ENCODE measurements at regions of chr11 and their contacts with region 1.

Region 1: GRCh38 chr11:83521647-83522596 is 235.8 kb upstream of the CCDC90B start:
- DNase-seq: peak in 2 of 4 experiments; percentile 2 to 7
- ATAC-seq: peak; percentile 53; the same call in 1 of the 3 replicates
- H3K4me3 ChIP-seq: no peak overlapping the region
- H3K27ac ChIP-seq: no peak overlapping the region
- H3K4me1 ChIP-seq: no peaks in the 10 kb centered on the region
- H3K27me3 ChIP-seq: no peaks in the 10 kb centered on the region
- CTCF ChIP-seq: peak in 2 of 3 experiments; percentile 17 to 35; a peak in 3 of 6 replicates
- EP300 ChIP-seq: no peak
- POLR2A ChIP-seq: no peak
- RAD21 ChIP-seq: no peak

Region 2: DNA sequence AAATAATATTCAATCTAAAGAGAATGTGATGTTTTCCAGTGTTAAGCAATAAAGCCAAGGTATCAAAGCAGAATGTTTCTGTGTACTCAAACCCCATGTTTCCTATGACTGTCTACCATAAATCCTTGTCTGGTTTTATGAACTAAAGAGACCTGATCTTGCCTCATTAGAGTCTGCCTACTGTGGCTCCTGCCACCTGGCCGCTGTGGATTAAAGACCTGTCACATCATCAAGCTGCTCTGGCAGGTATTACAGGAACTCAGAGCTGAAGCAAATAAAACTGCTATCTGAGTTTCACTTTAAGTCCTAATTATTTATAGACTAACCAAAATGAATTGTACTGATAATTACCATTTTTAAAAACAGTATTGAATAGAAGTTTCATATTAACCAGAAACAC is 28.0 kb before region 1 on chr11:
- CTCF ChIA-PET with region 1: no interaction called
- POLR2A ChIA-PET with region 1: no interaction called
- in situ Hi-C with region 1: no loop called
- intact Hi-C with region 1: loop called (anchors 1 kb)
- DNase-seq: no peak
- ATAC-seq: no peak
- H3K4me3 ChIP-seq: no peak overlapping the region
- H3K27ac ChIP-seq: no peak overlapping the region
- H3K4me1 ChIP-seq: no peaks in the 10 kb centered on the region
- H3K27me3 ChIP-seq: no peaks in the 10 kb centered on the region
- CTCF ChIP-seq: no peak
- EP300 ChIP-seq: no peak
- POLR2A ChIP-seq: no peak
- RAD21 ChIP-seq: no peak

Measured in K562 (cell line).